Activated T-helper 1 cell treated with anti-CD3 and anti-CD28 coated beads, Interleukin-12 subunit alpha, Interleukin-12 subunit beta, Interleukin-2, Interleukin-4 antibody, amounts not matched to agents 30 ng/mL and 10 ng/mL and 1 ng/mL, durations not matched to agents 14 hours and 24 hours and 36 hours (primary cell): ENCODE measurements at regions of chr5 and their contacts with region 1.

Region 1: DNA sequence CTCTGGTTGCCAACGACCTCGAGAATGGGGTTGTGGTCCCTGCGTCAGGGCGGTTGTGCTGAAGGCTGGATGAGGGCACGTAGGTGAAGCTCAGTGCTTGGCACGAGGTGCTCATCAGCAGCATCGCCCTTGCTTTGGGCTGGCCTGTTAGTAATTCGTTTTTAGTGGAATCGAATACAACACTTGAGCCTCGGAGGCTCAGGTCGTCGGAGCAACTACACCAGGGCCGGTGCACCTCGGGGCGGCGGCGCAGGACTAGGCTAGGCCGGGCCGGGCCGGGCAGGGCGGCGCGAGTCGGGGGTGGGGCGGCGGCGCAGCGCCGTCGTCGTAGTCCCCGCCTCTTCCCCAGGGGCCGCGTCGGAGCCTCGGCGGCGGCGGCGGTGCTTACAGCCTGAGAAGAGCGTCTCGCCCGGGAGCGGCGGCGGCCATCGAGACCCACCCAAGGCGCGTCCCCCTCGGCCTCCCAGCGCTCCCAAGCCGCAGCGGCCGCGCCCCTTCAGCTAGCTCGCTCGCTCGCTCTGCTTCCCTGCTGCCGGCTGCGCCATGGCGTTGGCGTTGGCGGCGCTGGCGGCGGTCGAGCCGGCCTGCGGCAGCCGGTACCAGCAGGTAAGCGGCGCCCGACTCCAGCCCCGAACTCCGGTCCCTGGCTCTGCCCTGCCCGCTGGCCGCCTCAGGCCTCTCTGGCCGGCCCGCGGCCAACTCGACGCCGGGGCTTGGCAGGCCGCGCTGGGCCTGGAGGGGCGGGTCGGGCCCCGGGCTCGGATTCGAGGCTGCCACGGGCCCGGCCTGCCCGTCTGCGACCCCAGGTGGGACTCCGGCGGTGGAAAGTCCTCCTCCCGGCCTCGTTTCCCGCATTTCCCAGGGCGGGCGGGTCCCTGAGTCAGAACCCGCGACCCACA is at the start of gene NDFIP1:
- DNase-seq: peak; percentile 85
- H3K4me3 Mint-ChIP-seq: peak within 1 kb of the TSS; percentile 97
- H3K27ac Mint-ChIP-seq: peak within 1 kb of the TSS; percentile 100
- H3K4me1 Mint-ChIP-seq: peaks cover 80% of the 10 kb centered on the region
- H3K27me3 Mint-ChIP-seq: no peaks in the 10 kb centered on the region
- total RNA-seq, gene NDFIP1: 119 and 129 TPM in 2 replicates

Region 2: GRCh38 chr5:142006363-142007236 is 102.1 kb before region 1 on chr5:
- intact Hi-C with region 1: loop called (anchors 2 kb)
- DNase-seq: peak; percentile 58
- H3K4me3 Mint-ChIP-seq: peak overlapping the region; percentile 80
- H3K27ac Mint-ChIP-seq: peak overlapping the region; percentile 94
- H3K4me1 Mint-ChIP-seq: peaks cover 72% of the 10 kb centered on the region
- H3K27me3 Mint-ChIP-seq: no peaks in the 10 kb centered on the region

Region 3: GRCh38 chr5:142073362-142073988 is 35.2 kb before region 1 on chr5:
- intact Hi-C with region 1: loop called (anchors 1 kb)
- DNase-seq: no peak
- H3K4me3 Mint-ChIP-seq: no peak overlapping the region
- H3K27ac Mint-ChIP-seq: peak overlapping the region; percentile 95
- H3K4me1 Mint-ChIP-seq: peaks cover 43% of the 10 kb centered on the region
- H3K27me3 Mint-ChIP-seq: no peaks in the 10 kb centered on the region

Region 4: DNA sequence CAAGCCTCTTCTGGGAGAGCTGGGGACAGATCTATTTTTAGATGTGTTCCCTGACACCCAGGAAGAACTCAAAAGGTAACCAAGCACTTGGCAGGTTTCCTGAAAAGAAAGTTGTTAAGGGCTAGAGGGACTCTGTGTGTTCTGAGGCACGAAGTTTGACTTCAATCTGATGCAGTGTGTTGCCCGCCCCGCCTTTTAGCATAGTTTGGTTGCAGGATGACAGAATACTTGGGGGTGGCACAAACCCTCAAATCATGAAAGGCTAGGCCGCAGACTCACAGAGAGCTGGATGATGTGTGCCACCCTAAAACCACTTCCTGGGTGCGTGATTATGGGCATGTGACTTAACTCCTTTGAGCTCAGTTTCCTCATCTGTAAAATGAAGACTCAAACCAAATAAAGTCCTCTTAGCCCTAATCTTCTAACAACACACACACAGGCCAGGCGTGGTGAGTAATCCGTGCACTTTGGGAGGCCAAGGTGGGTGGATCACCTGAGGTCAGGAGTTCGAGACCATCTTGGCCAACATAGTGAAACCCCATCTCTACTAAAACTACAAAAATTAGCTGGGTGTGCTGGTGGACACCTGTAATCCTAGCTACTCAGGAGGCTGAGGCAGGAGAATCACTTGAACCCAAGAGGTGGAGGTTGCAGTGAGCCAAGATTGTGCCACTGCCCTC is 12.9 kb before region 1 on chr5:
- intact Hi-C with region 1: loop called (anchors 1 kb)
- DNase-seq: peak; percentile 63
- H3K4me3 Mint-ChIP-seq: peak overlapping the region; percentile 16
- H3K27ac Mint-ChIP-seq: peak overlapping the region; percentile 94
- H3K4me1 Mint-ChIP-seq: peaks cover 51% of the 10 kb centered on the region
- H3K27me3 Mint-ChIP-seq: no peaks in the 10 kb centered on the region

Region 5: DNA sequence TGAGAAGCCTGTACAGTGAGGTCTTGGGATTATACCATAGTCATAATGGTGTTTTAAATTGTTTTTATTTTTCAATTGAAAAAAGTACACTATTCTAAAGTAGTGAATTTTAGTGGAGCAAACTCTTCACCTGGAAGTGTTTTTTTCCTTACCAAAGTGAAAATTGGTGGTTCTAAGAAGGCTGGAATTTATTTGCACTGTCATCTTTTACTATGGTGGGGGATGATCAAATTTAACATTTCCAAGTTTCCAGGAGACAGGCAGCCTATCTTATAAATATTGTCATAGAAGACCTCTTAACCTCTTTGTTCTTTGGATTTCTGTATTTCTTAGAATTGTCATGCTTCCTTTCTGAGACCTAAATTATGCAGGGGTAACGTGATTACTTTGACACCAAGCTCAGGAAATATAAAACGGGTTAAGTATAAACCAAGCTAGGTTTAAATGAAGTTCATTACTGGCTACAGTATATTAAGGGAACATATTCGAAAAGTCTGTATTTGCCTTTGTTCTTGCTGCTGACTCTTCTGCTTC is 20.1 kb after region 1 on chr5:
- intact Hi-C with region 1: no loop called
- DNase-seq: no peak
- H3K4me3 Mint-ChIP-seq: peak overlapping the region; percentile 8
- H3K27ac Mint-ChIP-seq: peak overlapping the region; percentile 80
- H3K4me1 Mint-ChIP-seq: peaks cover 45% of the 10 kb centered on the region
- H3K27me3 Mint-ChIP-seq: no peaks in the 10 kb centered on the region

Region 6: GRCh38 chr5:142145106-142145900 is 36.6 kb after region 1 on chr5:
- intact Hi-C with region 1: loop called (anchors 1 kb)
- DNase-seq: peak; percentile 26
- H3K4me3 Mint-ChIP-seq: no peak overlapping the region
- H3K27ac Mint-ChIP-seq: no peak overlapping the region
- H3K4me1 Mint-ChIP-seq: peaks cover 6% of the 10 kb centered on the region
- H3K27me3 Mint-ChIP-seq: no peaks in the 10 kb centered on the region